ENCODE measurements at regions of chr11 and their contacts with region 1.

Region 1: DNA sequence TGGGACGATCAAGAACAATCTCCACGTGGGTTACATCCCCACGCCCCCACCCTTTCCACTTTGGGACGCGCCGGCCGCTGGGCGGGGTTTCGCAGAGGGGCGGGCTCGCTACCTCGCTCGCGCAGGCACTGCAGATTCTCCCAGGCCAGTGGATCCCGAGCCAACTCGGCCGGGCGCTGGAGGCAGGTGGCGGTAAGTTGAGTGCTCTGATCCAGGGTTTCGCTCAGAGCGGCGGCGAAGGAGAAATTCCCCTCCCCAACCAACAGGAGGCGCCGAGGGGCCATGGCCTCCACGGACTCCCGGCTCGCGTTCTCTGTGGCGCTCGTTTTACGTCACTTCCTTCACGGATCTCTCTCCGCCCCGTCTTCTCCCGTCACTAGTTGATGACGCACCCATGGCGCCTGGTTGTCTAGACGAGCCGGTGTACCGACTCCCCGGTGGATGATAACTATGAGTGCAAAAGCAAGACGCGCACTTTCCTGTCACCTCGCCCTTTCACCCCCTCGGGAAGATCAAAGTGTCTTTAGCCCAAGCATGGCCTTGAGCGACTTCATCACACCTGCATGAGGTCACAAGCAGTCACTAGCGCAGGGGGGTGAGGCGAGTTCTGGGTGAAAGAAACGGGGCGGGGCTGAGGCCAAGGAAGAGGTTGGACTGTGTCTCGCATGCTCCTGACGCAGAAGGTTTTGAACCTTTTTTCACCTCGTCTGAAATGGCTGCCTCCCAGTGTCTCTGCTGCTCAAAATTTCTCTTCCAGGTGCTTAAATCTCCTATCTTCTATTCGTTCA is at the starts of genes CFAP68 and FDXACB1:
- DNase-seq: peak; percentile 97 to 98
- ATAC-seq: peak; percentile 92 to 93
- H3K4me3 ChIP-seq: peak within 1 kb of the TSS; percentile 58 to 75 (median 68)
- H3K27ac ChIP-seq: peak within 1 kb of the TSS; percentile 81 to 92 (median 88)
- H3K4me1 ChIP-seq: peaks cover 8 to 19% of the 10 kb centered on the region in 2 donors
- H3K27me3 ChIP-seq: no peaks in the 10 kb centered on the region
- CTCF ChIP-seq: peak; percentile 97 to 99 (median 98)
- POLR2A ChIP-seq: peak; percentile 47 to 69
- total RNA-seq, gene CFAP68: 8.2 to 20.9 (median 9.8) TPM
- total RNA-seq, gene FDXACB1: 0.11 to 0.91 (median 0.29) TPM

Region 2: DNA sequence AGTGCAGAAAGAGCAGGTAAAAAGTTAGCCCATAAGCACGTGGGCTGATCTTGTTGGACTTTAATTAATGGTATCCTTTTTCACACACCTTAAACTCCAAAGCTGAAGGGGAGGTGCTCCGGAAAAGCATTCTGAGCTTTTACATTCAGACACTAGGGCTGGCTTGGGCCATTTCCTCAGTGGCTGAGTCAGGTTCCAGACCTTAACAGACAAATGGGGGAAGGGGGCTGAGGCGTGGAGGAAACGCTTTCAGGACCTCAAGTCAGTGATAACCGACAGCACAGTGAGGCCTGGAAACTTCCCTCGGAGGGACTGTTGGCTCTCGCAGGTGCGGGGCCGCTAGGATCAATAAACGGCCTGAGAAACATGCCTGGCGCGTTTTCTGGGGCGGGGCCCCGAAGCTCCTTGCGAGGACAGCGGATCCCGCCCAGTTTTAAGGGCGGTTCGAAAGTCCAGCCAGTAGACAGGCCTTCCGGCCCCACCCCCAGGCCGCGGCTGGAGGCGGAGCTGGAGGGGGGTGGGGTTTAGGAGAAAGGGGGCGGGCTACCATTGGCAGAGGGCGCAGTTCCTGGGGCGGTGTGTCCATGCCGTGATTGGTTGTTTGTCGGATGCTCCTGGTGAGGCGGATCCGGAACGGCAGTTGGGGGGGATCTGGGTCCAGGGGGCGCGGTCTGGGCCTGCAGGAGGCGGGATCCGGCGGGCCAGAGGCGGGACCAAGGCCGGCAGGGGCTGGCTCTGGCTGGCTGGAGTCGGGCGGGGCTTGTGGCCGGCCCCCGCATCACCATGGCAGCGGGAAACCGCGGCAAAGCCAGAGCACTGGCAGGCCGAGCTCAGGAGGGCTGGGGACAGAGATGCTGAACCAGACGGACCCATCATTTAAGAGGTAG is 47.7 kb after region 1 on chr11:
- in situ Hi-C with region 1: loop called in 1 of 4 experiments (anchors 10 kb)
- intact Hi-C with region 1: loop called (anchors 1 kb)
- DNase-seq: peak; percentile 93 to 96
- ATAC-seq: peak; percentile 76 to 77
- H3K4me3 ChIP-seq: peak overlapping the region; percentile 46 to 62 (median 53)
- H3K27ac ChIP-seq: peak overlapping the region; percentile 91 to 94 (median 92)
- H3K4me1 ChIP-seq: peaks cover 51 to 55% of the 10 kb centered on the region in 2 donors
- H3K27me3 ChIP-seq: no peaks in the 10 kb centered on the region
- CTCF ChIP-seq: peak in 1 of 5 experiments; percentile 21
- POLR2A ChIP-seq: peak; percentile 78 to 87

Region 3: GRCh38 chr11:111982019-111982464 is 103.0 kb after region 1 on chr11:
- in situ Hi-C with region 1: loop called in 2 of 4 experiments (anchors 10 kb)
- intact Hi-C with region 1: loop called (anchors 5 kb)
- DNase-seq: peak; percentile 39 to 76
- ATAC-seq: peak; percentile 82 to 92
- H3K4me3 ChIP-seq: no peak overlapping the region
- H3K27ac ChIP-seq: peak overlapping the region; percentile 13 to 42 (median 39)
- H3K4me1 ChIP-seq: peaks cover 14 to 25% of the 10 kb centered on the region in 2 donors
- H3K27me3 ChIP-seq: no peaks in the 10 kb centered on the region
- CTCF ChIP-seq: peak; percentile 69 to 82 (median 73)
- POLR2A ChIP-seq: no peak

Region 4: GRCh38 chr11:112074026-112074811 is 195.2 kb after region 1 on chr11 and contains the start of gene NKAPD1:
- in situ Hi-C with region 1: loop called in 1 of 4 experiments (anchors 10 kb)
- intact Hi-C with region 1: no loop called
- DNase-seq: peak; percentile 52 to 69
- ATAC-seq: peak; percentile 91 to 94
- H3K4me3 ChIP-seq: peak within 1 kb of the TSS; percentile 70 to 86 (median 83)
- H3K27ac ChIP-seq: peak within 1 kb of the TSS; percentile 82 to 96 (median 88)
- H3K4me1 ChIP-seq: peaks cover 15 to 22% of the 10 kb centered on the region in 2 donors
- H3K27me3 ChIP-seq: no peaks in the 10 kb centered on the region
- CTCF ChIP-seq: no peak
- POLR2A ChIP-seq: peak in 1 of 2 donors; percentile 43
- total RNA-seq, gene NKAPD1: 4.0 to 10.5 (median 9.0) TPM

Region 5: GRCh38 chr11:113314389-113315301 is 1435.6 kb after region 1 on chr11 and contains the start of gene TTC12:
- in situ Hi-C with region 1: no loop called
- intact Hi-C with region 1: loop called (anchors 10 kb)
- DNase-seq: peak; percentile 88 to 92
- ATAC-seq: peak; percentile 96 to 98
- H3K4me3 ChIP-seq: peak within 1 kb of the TSS; percentile 73 to 98 (median 84)
- H3K27ac ChIP-seq: peak within 1 kb of the TSS; percentile 78 to 94 (median 90)
- H3K4me1 ChIP-seq: peaks cover 8 to 18% of the 10 kb centered on the region in 2 donors
- H3K27me3 ChIP-seq: no peaks in the 10 kb centered on the region
- CTCF ChIP-seq: no peak
- POLR2A ChIP-seq: peak; percentile 27 to 42
- total RNA-seq, gene TTC12: 3.5 to 22.5 (median 5.2) TPM

Measured in gastrocnemius medialis (tissue), 4 donors.